MCF 10A (cell line): ENCODE measurements at regions of chr22 and their contacts with region 1.

Region 1: GRCh38 chr22:32674925-32675825 is 126.3 kb upstream of the TIMP3 start:
- DNase-seq: no peak
- H3K4me3 Mint-ChIP-seq: no peak overlapping the region
- H3K27ac Mint-ChIP-seq: no peak overlapping the region
- H3K4me1 Mint-ChIP-seq: peaks cover 10% of the 10 kb centered on the region
- H3K27me3 Mint-ChIP-seq: peaks cover 9% of the 10 kb centered on the region
- CTCF ChIP-seq: no peak

Region 2: GRCh38 chr22:32746732-32747131 is 71.6 kb after region 1 on chr22:
- CTCF ChIA-PET with region 1: interaction called, 11 read pairs
- POLR2A ChIA-PET with region 1: interaction called, 3 read pairs
- intact Hi-C with region 1: no loop called
- DNase-seq: no peak
- H3K4me3 Mint-ChIP-seq: no peak overlapping the region
- H3K27ac Mint-ChIP-seq: no peak overlapping the region
- H3K4me1 Mint-ChIP-seq: peaks cover 21% of the 10 kb centered on the region
- H3K27me3 Mint-ChIP-seq: no peaks in the 10 kb centered on the region
- CTCF ChIP-seq: no peak